Calu3 (cell line): ENCODE measurements at regions of chr15 and their contacts with region 1.

Region 1: DNA sequence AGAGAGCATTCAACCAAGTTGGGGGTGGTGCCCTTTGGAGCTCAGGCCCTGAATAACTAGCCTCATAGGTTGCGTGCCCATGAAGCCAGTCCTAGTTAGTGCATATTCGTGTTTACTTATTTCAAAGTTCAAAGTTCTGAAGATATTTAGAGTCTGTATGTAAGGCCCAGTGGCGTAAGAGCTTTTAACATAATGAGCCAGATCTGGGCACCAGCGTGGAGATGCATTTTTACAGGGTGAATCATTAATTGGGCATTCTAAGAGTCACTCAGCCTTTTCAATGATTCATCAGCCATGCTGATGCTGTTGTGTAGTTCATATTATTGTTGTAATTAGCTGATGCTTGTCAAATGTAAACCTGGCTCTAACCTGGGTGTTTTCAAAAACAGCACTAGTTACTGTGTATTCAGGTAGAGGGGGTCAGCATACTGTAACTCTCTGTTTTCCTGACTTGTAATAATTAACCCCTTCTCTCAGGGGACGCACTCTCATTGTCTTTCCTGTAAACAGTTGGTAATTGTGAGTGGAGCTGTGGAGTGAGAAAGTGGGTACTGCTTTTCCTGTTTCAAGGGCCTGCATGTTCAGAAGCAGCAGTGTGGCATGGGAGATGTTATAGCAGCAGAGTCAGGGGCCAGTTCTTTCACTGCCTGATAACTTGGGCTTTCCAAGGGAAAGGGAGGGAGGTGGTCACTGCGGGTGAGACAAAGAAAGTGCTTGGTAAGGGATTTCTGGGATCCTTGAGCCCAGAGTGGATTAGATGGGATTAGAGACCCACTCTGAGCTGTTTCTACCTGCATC is 104.9 kb downstream of the RPLP1 start:
- DNase-seq: peak; percentile 67
- H3K4me3 Mint-ChIP-seq: peak overlapping the region; percentile 32
- H3K27ac Mint-ChIP-seq: peak overlapping the region; percentile 25
- H3K4me1 Mint-ChIP-seq: peaks cover 74% of the 10 kb centered on the region
- H3K27me3 Mint-ChIP-seq: peaks cover 10% of the 10 kb centered on the region
- CTCF ChIP-seq: no peak

Region 2: GRCh38 chr15:69480932-69481658 is 76.4 kb before region 1 on chr15:
- CTCF ChIA-PET with region 1: interaction called, 6 read pairs
- intact Hi-C with region 1: loop called (anchors 2 kb)
- DNase-seq: peak; percentile 78
- H3K4me3 Mint-ChIP-seq: no peak overlapping the region
- H3K27ac Mint-ChIP-seq: no peak overlapping the region
- H3K4me1 Mint-ChIP-seq: peaks cover 35% of the 10 kb centered on the region
- H3K27me3 Mint-ChIP-seq: no peaks in the 10 kb centered on the region
- CTCF ChIP-seq: no peak

Region 3: GRCh38 chr15:69523010-69524001 is 34.2 kb before region 1 on chr15:
- CTCF ChIA-PET with region 1: interaction called, 6 read pairs
- intact Hi-C with region 1: loop called (anchors 2 kb)
- DNase-seq: peak; percentile 87
- H3K4me3 Mint-ChIP-seq: no peak overlapping the region
- H3K27ac Mint-ChIP-seq: no peak overlapping the region
- H3K4me1 Mint-ChIP-seq: peaks cover 26% of the 10 kb centered on the region
- H3K27me3 Mint-ChIP-seq: no peaks in the 10 kb centered on the region
- CTCF ChIP-seq: peak; percentile 61

Region 4: DNA sequence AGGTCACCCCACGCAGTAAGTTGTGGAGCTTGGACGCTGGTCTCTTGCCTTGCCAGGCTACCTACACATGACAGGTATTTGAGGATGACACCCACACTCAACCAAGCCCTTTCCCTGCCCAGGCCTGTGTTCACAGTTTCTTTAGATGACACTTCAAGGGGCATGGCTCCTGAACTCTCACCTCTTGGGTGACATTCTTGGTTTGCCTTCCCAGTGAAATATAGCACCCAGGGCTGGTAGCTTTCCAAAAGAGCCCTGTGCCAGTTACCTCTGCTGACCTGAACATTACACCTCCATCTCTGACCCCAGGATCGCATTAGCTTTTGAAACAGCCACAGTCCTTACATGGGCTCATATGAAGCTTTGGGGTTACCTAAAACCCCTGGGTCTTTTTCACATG is 43.1 kb after region 1 on chr15:
- CTCF ChIA-PET with region 1: no interaction called
- intact Hi-C with region 1: no loop called
- DNase-seq: no peak
- H3K4me3 Mint-ChIP-seq: no peak overlapping the region
- H3K27ac Mint-ChIP-seq: no peak overlapping the region
- H3K4me1 Mint-ChIP-seq: peaks cover 14% of the 10 kb centered on the region
- H3K27me3 Mint-ChIP-seq: peaks cover 93% of the 10 kb centered on the region
- CTCF ChIP-seq: no peak